IMR-90 (cell line): ENCODE measurements at regions of chr2 and their contacts with region 1.

Region 1: DNA sequence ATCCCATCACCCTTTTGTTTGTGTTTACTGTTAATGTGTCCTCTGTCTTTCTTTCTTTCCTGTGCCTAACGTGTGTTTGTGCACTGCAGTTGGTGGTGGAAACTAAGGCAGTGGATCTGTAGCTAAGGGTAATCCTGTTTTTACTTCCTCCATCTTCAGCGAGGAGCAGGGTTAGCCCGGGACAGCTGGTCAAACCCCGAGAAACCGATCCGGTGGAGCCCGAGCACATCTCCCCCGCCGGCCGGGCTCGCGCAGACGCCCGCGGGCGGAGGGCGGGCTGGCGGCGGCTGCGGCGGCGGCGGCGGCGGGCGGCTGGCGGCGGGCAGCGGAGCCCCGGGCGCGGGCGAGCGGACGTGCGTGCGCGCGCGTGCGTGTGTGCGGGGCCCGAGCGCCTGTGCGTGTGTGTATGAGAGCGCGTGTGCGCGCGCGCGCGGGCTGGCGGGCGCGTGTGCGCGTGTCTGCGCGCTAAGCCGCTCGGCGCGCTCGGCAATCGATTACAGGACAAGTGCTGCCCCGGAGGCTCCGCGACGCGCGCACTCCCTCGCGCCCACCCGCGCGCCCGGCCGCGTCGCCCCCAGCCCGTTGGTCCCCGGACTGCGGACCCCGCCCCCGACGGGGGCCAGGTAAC is at the start of gene IKZF2:
- DNase-seq: peak; percentile 94
- ATAC-seq: peak; percentile 86
- H3K4me3 ChIP-seq: peak within 1 kb of the TSS; percentile 73
- H3K27ac ChIP-seq: peak within 1 kb of the TSS; percentile 95
- H3K4me1 ChIP-seq: no peaks in the 10 kb centered on the region
- H3K27me3 ChIP-seq: no peaks in the 10 kb centered on the region
- CTCF ChIP-seq: no peak
- POLR2A ChIP-seq: 0 out of 2 replicates have a peak, but pooled peaks have one; percentile 31
- RAD21 ChIP-seq: 0 out of 2 replicates have a peak, but pooled peaks have one; percentile 3
- total RNA-seq, gene IKZF2: 19.4 and 25.5 TPM in 2 replicates

Region 2: DNA sequence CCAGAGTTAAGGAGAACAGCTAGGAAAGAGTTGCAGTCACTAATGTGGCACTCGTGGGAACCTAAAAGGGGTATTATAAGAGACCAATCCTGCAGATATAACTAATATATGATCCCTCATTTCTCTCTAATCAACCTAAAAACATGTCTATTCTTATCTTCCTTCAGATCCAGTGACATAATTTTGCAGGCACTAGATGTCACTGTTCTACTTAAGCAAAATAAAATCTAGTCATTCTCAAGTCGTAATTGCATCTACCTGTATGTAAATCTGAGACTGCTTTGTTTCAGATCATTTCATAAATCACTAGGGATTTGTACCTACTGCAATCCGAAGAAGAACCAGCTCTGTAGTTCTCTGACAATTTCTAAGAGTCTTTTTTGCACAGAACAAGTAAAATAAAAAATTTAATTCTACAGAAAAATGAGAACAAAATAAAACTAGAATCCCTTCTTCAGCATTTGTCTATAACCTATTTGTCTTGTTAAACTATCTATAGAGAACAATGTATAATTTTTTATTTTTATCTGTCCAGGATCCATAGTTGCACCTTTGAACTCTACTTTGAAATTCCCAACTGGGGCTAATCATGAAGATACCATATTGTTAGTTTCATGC is 556.4 kb before region 1 on chr2:
- CTCF ChIA-PET with region 1: no interaction called
- POLR2A ChIA-PET with region 1: no interaction called
- dilution Hi-C with region 1: no loop called
- in situ Hi-C with region 1: no loop called
- intact Hi-C with region 1: loop called (anchors 1 kb)
- DNase-seq: peak; percentile 46
- ATAC-seq: 0 out of 2 replicates have a peak, but pooled peaks have one; percentile 28
- H3K4me3 ChIP-seq: no peak overlapping the region
- H3K27ac ChIP-seq: no peak overlapping the region
- H3K4me1 ChIP-seq: no peaks in the 10 kb centered on the region
- H3K27me3 ChIP-seq: no peaks in the 10 kb centered on the region
- CTCF ChIP-seq: peak; percentile 31
- POLR2A ChIP-seq: no peak
- RAD21 ChIP-seq: peak; percentile 28; the same call in 1 of the 2 replicates

Region 3: DNA sequence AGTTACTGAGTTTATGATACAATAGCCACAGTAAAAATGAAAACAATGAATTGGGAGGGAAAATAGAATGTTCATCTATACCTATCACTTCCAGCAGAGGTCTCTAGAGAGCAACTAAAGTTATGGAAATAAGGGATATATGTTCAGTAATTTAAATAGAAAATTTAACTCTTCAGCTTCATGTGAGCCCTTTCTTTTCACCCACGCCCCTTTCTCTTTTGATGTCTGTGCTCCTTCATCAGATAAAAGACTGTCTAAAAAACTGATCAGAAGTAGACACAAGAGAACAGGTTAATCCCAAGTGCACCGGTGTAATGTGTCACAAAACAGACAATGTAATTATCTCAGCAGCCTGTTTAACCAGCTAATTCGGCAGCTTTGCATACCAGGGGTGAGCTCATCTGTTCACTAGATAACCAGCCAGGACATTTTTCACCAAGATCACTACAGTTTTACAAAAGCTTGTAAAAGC is 374.5 kb before region 1 on chr2:
- CTCF ChIA-PET with region 1: interaction called, 11 read pairs
- POLR2A ChIA-PET with region 1: no interaction called
- dilution Hi-C with region 1: no loop called
- in situ Hi-C with region 1: loop called (anchors 10 kb)
- intact Hi-C with region 1: loop called (anchors 1 kb)
- DNase-seq: peak; percentile 46
- ATAC-seq: peak; percentile 96
- H3K4me3 ChIP-seq: peak overlapping the region; percentile 52; the same call in 1 of the 2 replicates
- H3K27ac ChIP-seq: no peak overlapping the region
- H3K4me1 ChIP-seq: no peaks in the 10 kb centered on the region
- H3K27me3 ChIP-seq: no peaks in the 10 kb centered on the region
- CTCF ChIP-seq: peak; percentile 76
- POLR2A ChIP-seq: no peak
- RAD21 ChIP-seq: peak; percentile 74

Region 4: GRCh38 chr2:212863185-212863588 is 288.4 kb before region 1 on chr2:
- CTCF ChIA-PET with region 1: no interaction called
- POLR2A ChIA-PET with region 1: no interaction called
- dilution Hi-C with region 1: no loop called
- in situ Hi-C with region 1: no loop called
- intact Hi-C with region 1: loop called (anchors 5 kb)
- DNase-seq: no peak
- ATAC-seq: no peak
- H3K4me3 ChIP-seq: no peak overlapping the region
- H3K27ac ChIP-seq: no peak overlapping the region
- H3K4me1 ChIP-seq: peaks cover 1% of the 10 kb centered on the region; the same call in 1 of the 2 replicates
- H3K27me3 ChIP-seq: no peaks in the 10 kb centered on the region
- CTCF ChIP-seq: peak; percentile 42
- POLR2A ChIP-seq: no peak
- RAD21 ChIP-seq: peak; percentile 57

Region 5: GRCh38 chr2:212912445-212913103 is 239.0 kb before region 1 on chr2:
- CTCF ChIA-PET with region 1: no interaction called
- POLR2A ChIA-PET with region 1: interaction called, 3 read pairs
- dilution Hi-C with region 1: no loop called
- in situ Hi-C with region 1: no loop called
- intact Hi-C with region 1: loop called (anchors 5 kb)
- DNase-seq: peak; percentile 75
- ATAC-seq: peak; percentile 78
- H3K4me3 ChIP-seq: no peak overlapping the region
- H3K27ac ChIP-seq: peak overlapping the region; percentile 86
- H3K4me1 ChIP-seq: peaks cover 12% of the 10 kb centered on the region
- H3K27me3 ChIP-seq: no peaks in the 10 kb centered on the region
- CTCF ChIP-seq: no peak
- POLR2A ChIP-seq: no peak
- RAD21 ChIP-seq: no peak

Region 6: DNA sequence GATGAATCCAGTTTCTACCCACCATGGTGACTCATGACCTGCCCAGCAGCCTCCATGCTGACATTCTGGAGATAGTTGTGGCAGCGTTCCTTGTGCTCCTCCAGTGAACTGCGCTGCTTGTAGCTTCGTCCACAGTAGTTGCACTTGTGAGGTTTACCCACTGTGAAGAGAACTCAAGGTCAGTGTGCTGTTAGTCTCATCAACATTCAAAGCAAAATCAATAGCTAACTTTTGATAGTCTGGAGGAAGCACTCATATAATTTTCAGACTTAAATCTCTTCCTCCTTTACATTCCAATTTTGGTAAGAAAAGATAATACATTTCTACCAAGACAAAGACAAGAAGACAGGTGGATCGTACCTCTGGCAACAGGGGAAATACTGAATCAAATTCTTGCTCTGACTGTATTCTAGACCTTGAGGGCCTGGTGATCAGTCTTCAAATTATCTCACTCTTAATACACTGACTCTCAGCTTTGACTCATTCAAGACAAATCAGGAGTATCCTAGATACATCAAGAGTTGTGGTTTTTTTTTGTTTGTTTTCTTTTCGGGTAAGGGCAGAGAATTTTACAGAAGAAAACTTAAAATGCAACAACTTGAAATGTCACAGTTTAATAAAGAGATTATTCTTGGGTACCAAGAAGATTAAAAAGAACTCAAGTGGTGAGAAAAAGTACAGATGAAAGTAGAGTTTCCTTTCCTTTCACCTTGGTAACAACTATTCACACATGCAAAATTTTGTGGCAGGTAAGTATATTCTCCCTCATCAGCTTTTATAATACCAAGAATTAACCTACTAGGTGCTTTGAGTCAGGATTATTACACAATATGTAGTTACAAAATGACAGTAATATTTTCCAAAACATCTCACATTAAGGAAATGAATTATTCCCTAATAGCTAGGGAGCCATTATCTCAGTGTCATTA is 129.3 kb before region 1 on chr2:
- CTCF ChIA-PET with region 1: interaction called, 3 read pairs
- POLR2A ChIA-PET with region 1: no interaction called
- dilution Hi-C with region 1: no loop called
- in situ Hi-C with region 1: no loop called
- intact Hi-C with region 1: loop called (anchors 2 kb)
- DNase-seq: peak; percentile 75
- ATAC-seq: peak; percentile 82
- H3K4me3 ChIP-seq: no peak overlapping the region
- H3K27ac ChIP-seq: no peak overlapping the region
- H3K4me1 ChIP-seq: no peaks in the 10 kb centered on the region; the same call in 1 of the 2 replicates
- H3K27me3 ChIP-seq: no peaks in the 10 kb centered on the region
- CTCF ChIP-seq: no peak
- POLR2A ChIP-seq: no peak
- RAD21 ChIP-seq: no peak

Region 7: DNA sequence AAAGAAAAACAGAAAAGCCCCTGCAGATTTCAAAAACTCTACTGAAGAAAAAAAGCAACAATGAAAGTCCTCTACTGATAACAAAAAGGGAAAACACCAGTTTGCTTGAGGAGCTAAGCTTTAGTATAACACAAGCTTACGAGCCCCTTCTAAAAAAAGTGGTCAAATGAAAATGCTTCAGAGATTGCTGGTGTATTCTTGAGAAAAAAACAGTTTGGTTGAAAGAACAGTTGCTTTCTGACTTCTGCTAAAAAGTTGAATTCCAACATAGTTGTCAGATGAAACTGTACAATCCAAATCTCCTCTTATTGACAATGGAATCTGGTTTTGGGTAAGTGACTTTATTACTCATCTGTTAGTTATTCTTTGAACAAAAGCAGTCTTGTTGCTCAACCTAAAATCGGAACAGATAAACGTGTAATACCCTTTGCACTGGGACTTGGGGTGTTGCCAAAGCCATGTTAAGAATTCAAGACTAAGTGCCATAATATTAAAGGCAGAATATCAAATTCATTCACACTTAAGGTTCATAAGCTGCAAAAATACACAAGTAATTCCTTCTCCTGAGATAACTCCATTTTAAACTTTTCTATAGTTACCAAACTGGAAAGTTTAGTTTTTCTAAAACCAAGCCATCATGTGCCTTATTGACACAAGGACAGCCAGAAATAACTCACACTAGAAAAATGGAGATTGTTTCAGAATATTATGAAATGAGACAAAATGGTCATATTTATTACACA is 87.4 kb after region 1 on chr2:
- CTCF ChIA-PET with region 1: no interaction called
- POLR2A ChIA-PET with region 1: no interaction called
- dilution Hi-C with region 1: no loop called
- in situ Hi-C with region 1: no loop called
- intact Hi-C with region 1: loop called (anchors 2 kb)
- DNase-seq: peak; percentile 86
- ATAC-seq: peak; percentile 75
- H3K4me3 ChIP-seq: no peak overlapping the region
- H3K27ac ChIP-seq: peak overlapping the region; percentile 77; the same call in 1 of the 2 replicates
- H3K4me1 ChIP-seq: peaks cover 8% of the 10 kb centered on the region
- H3K27me3 ChIP-seq: no peaks in the 10 kb centered on the region
- CTCF ChIP-seq: no peak
- POLR2A ChIP-seq: no peak
- RAD21 ChIP-seq: no peak

Region 8: DNA sequence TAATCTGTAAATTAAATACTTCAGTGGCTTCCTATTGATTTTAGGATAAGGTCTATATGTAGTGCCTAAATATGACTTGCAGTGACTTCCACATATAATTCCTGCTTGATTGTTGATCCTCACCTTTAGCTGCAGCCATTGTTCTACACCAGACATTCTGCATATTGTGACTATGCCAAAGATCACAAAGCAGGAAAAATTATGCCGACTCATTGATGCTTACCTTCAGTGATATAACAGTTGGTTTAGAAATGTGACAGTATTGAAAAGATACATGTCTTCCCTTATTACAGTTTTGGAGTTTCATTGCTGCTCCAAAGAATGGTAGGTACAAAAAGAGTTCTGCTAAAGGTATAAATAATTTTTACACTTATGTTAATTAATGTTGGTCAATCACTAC is 120.4 kb after region 1 on chr2:
- CTCF ChIA-PET with region 1: no interaction called
- POLR2A ChIA-PET with region 1: no interaction called
- dilution Hi-C with region 1: no loop called
- in situ Hi-C with region 1: no loop called
- intact Hi-C with region 1: no loop called
- DNase-seq: no peak
- ATAC-seq: no peak
- H3K4me3 ChIP-seq: no peak overlapping the region
- H3K27ac ChIP-seq: no peak overlapping the region
- H3K4me1 ChIP-seq: no peaks in the 10 kb centered on the region
- H3K27me3 ChIP-seq: no peaks in the 10 kb centered on the region
- CTCF ChIP-seq: no peak
- POLR2A ChIP-seq: no peak
- RAD21 ChIP-seq: no peak